Heart right ventricle (tissue), 16 donors: ENCODE measurements at regions of chr12 and their contacts with region 1.

Region 1: DNA sequence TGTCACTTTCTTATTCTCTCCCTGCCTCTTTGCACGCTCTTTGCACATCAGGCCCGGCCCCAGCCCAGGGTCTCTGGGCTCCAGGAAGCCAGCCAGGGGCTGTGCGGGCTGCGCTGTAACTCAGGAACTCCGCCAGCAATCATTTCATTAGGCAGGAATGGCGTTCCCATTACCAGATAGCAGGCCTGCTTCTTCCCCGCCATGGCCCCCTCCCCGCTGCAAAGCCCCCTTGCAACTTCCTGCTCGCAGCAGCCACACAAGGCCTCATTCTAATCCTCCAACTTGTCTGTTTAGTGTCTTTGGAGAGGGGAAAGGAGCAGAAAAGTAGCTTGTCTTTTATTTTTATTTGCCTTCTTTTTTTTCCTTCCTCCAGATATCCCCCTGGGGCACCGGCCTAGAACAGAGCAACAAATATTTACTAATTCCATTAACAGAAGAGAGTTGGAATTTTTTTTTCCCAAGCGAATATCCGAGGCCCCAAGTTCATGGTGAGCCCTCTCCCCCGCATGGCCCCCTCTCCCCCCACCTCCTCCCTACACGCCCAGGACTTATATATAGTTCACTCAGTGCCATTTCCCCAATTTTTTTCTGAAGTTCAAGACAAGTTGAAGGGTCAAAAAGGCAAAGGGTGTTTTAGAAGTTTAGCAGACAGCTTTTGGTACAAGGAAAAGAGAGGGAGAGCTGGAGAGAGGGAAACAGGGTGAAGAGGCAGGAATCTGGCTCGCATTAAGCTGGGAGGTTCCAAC is 329.4 kb upstream of the TBX3 start:
- DNase-seq: peak; percentile 27 to 39
- ATAC-seq: peak; percentile 30 to 86 (median 66)
- H3K4me3 ChIP-seq: no peak overlapping the region
- H3K27ac ChIP-seq: peak overlapping the region in 8 of 10 donors; percentile 6 to 57 (median 34)
- H3K4me1 ChIP-seq: peaks cover 0 to 24% (median 0%) of the 10 kb centered on the region in 9 donors
- H3K27me3 ChIP-seq: peaks cover 0 to 18% (median 0%) of the 10 kb centered on the region in 7 donors
- CTCF ChIP-seq: no peak

Region 2: DNA sequence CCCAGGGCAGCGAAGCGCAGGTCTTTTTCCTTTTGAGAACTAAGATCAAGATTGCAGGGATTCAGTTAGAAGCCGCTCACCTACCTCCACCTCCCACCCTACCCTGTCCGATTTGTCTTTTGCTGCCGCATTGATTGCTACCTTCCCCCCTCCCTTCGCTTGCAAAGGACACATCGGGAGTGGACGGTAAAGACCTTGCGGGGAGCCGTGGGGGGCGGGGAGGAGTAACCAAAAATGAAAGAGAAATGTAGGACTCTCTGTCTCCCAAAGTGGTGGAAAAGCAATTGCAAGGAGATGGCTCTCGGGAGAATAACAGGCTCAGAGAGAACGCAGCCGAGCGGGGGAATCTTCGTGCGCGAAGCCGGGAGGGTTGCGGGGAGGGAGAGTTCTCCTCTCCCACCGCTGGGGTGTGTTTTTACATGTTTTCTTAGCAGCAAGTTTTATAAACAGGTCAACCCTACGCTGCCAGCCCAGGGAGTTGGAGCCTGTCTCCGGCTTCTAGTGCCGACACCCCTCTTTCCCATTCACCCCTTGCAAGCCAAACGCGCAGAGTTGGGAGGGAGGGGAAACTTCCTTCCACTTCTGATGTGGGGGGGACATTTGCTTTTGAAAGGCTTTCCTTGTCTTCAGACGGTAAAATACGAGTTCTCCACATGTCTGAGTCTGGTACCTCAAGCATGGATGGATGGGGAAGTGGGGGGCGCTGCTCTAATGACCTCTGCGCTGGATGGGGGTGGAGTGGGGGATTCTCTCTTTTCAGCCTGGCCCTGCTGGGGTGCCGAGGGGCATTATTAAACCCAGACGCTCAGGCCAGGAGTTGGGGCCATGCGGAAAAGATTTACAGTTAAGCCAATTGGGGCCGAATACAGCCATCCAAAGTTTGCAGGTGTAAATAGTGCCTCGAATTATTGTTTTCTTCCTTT is 320.6 kb before region 1 on chr12:
- intact Hi-C with region 1: loop called in 1 of 10 experiments (anchors 10 kb)
- DNase-seq: no peak
- ATAC-seq: peak in 5 of 8 donors; percentile 17 to 50 (median 34)
- H3K4me3 ChIP-seq: peak overlapping the region; percentile 4 to 49 (median 40)
- H3K27ac ChIP-seq: no peak overlapping the region
- H3K4me1 ChIP-seq: peaks cover 2 to 19% (median 10%) of the 10 kb centered on the region in 9 donors
- H3K27me3 ChIP-seq: peaks cover 41 to 100% (median 99%) of the 10 kb centered on the region in 7 donors
- CTCF ChIP-seq: no peak

Region 3: DNA sequence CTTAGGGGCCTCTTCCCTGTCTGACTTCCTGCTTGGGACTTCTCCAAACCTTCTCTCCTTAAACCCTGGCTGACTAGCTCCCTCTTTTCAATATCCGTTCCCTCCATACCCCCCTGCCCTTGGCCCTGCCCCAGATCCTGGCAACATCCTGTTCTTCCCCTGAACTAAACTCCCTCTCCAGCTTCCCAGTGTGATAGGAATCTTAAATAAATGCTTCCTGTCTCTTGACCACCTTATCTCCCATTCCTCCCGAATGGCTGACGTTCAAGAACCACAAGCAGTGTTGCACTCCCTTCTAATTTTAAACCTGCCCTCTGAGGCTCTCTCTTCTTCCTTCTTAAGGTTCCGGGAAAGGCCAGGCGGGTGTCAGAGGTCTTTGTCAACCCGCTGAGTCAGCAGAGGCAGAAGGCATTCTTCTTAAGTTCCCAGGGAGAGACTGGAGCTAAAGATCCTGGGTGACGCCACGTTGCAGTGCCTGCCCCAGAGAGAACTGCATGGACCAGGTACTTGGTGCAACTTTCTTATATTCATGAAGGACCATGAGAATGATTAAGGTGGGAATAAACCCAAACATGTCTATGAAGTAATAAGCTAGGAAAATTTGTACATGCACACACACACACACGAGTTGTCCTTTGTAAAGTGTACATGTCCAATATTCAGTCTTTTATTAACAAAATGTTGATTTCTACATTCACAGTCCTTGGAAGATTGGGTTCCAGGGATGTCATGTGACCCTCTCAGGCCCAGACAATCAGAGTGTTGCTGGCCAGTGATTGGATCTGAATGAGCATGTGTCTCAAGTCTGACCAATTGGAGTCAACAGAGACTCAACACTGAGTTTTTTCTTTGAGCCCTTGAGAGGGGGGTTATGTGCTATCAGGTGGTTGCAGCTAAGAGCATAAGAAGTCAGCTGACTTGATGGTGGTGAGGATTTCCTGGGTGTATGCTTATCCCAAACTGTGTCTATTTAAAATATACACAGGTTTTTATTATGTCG is 90.8 kb after region 1 on chr12:
- intact Hi-C with region 1: loop called in 1 of 10 experiments (anchors 5 kb)
- DNase-seq: peak; percentile 32 to 54
- ATAC-seq: peak; percentile 51 to 88 (median 78)
- H3K4me3 ChIP-seq: no peak overlapping the region
- H3K27ac ChIP-seq: peak overlapping the region in 7 of 10 donors; percentile 19 to 51 (median 43)
- H3K4me1 ChIP-seq: peaks cover 0 to 23% (median 10%) of the 10 kb centered on the region in 9 donors
- H3K27me3 ChIP-seq: no peaks in the 10 kb centered on the region
- CTCF ChIP-seq: no peak

Region 4: GRCh38 chr12:115176741-115177400 is 163.5 kb after region 1 on chr12:
- intact Hi-C with region 1: no loop called
- DNase-seq: no peak
- ATAC-seq: no peak
- H3K4me3 ChIP-seq: no peak overlapping the region
- H3K27ac ChIP-seq: no peak overlapping the region
- H3K4me1 ChIP-seq: no peaks in the 10 kb centered on the region
- H3K27me3 ChIP-seq: no peaks in the 10 kb centered on the region
- CTCF ChIP-seq: no peak

Region 5: GRCh38 chr12:115341442-115341841 is 328.0 kb after region 1 on chr12:
- intact Hi-C with region 1: loop called in 1 of 10 experiments (anchors 10 kb)
- DNase-seq: peak; percentile 23 to 81
- ATAC-seq: peak; percentile 55 to 82 (median 64)
- H3K4me3 ChIP-seq: no peak overlapping the region
- H3K27ac ChIP-seq: peak overlapping the region in 6 of 10 donors; percentile 21 to 76 (median 50)
- H3K4me1 ChIP-seq: peaks cover 0 to 27% (median 11%) of the 10 kb centered on the region in 9 donors
- H3K27me3 ChIP-seq: no peaks in the 10 kb centered on the region
- CTCF ChIP-seq: no peak